PC-3 (cell line): ENCODE measurements at regions of chr2 and their contacts with region 1.

Region 1: GRCh38 chr2:7427293-7428060 is 510.3 kb downstream of the RNF144A start:
- DNase-seq: peak; percentile 84
- ATAC-seq: peak; percentile 43
- H3K4me3 ChIP-seq: no peak overlapping the region
- H3K27ac ChIP-seq: peak overlapping the region; percentile 22; the same call in 1 of the 2 replicates
- H3K4me1 ChIP-seq: no peaks in the 10 kb centered on the region
- H3K27me3 ChIP-seq: no peaks in the 10 kb centered on the region
- CTCF ChIP-seq: peak; percentile 89

Region 2: DNA sequence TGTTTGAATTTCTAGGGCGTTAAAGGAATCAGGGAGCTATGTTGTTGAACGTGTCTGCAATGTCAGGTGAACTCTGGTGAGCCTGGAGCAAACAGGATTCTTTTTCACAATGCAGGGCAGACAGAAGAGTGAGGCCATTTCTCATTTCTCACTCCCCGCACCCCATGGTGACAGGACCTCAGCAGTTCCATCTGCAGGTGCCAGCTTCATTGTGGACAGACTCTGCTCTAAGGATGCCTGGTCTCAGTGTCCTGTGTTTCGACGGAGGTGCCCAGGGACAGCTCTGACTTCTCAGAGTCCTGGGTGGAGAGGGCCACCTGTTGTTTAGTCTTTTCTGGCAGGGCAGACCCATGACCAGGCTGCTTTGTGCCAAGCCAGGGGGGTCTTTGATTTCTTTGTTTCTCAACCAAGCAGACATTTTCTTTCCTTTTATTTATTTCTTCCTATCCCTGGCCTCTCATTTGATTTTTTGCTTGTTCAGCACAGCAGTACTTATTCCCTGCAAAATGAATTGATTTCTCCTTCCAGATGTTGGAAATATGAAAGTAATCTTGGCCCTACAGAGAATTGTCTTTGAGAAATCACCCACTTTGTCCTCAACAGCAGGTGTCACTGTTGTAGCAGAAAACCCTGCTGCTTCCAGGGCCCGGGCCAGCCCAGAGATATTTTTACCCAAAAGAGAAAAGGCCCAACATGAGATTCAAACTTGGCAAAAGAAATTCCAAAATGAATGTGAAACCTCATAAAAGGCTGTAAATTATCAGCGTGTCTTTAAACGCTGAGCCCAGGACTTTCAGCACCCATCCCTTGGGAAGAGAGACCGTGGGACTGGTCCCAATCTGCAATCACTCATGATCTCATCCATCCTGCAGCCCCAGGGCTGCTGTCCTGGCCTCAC is 308.6 kb before region 1 on chr2:
- CTCF ChIA-PET with region 1: no interaction called
- POLR2A ChIA-PET with region 1: no interaction called
- intact Hi-C with region 1: loop called (anchors 2 kb)
- DNase-seq: peak; percentile 61
- ATAC-seq: peak; percentile 89
- H3K4me3 ChIP-seq: no peak overlapping the region
- H3K27ac ChIP-seq: no peak overlapping the region
- H3K4me1 ChIP-seq: no peaks in the 10 kb centered on the region
- H3K27me3 ChIP-seq: no peaks in the 10 kb centered on the region
- CTCF ChIP-seq: peak; percentile 89

Region 3: GRCh38 chr2:7517088-7517487 is 89.6 kb after region 1 on chr2:
- CTCF ChIA-PET with region 1: interaction called, 4 read pairs
- POLR2A ChIA-PET with region 1: no interaction called
- intact Hi-C with region 1: loop called (anchors 2 kb)
- DNase-seq: peak; percentile 89
- ATAC-seq: peak; percentile 83
- H3K4me3 ChIP-seq: peak overlapping the region; percentile 20; the same call in 1 of the 2 replicates
- H3K27ac ChIP-seq: peak overlapping the region; percentile 97
- H3K4me1 ChIP-seq: peaks cover 32% of the 10 kb centered on the region
- H3K27me3 ChIP-seq: no peaks in the 10 kb centered on the region
- CTCF ChIP-seq: no peak

Region 4: GRCh38 chr2:7672027-7672684 is 244.7 kb after region 1 on chr2:
- CTCF ChIA-PET with region 1: interaction called, 6 read pairs
- POLR2A ChIA-PET with region 1: no interaction called
- intact Hi-C with region 1: loop called (anchors 1 kb)
- DNase-seq: peak; percentile 88
- ATAC-seq: peak; percentile 74
- H3K4me3 ChIP-seq: no peak overlapping the region
- H3K27ac ChIP-seq: no peak overlapping the region
- H3K4me1 ChIP-seq: 0 out of 2 replicates have a peak, but pooled peaks cover 6% of the 10 kb centered on the region
- H3K27me3 ChIP-seq: no peaks in the 10 kb centered on the region
- CTCF ChIP-seq: peak; percentile 92

Region 5: GRCh38 chr2:7812231-7812995 is 384.9 kb after region 1 on chr2:
- CTCF ChIA-PET with region 1: interaction called, 4 read pairs
- POLR2A ChIA-PET with region 1: no interaction called
- intact Hi-C with region 1: loop called (anchors 10 kb)
- DNase-seq: peak; percentile 88
- ATAC-seq: peak; percentile 91
- H3K4me3 ChIP-seq: peak overlapping the region; percentile 3; the same call in 1 of the 2 replicates
- H3K27ac ChIP-seq: peak overlapping the region; percentile 94
- H3K4me1 ChIP-seq: peaks cover 35% of the 10 kb centered on the region
- H3K27me3 ChIP-seq: no peaks in the 10 kb centered on the region
- CTCF ChIP-seq: no peak

Region 6: DNA sequence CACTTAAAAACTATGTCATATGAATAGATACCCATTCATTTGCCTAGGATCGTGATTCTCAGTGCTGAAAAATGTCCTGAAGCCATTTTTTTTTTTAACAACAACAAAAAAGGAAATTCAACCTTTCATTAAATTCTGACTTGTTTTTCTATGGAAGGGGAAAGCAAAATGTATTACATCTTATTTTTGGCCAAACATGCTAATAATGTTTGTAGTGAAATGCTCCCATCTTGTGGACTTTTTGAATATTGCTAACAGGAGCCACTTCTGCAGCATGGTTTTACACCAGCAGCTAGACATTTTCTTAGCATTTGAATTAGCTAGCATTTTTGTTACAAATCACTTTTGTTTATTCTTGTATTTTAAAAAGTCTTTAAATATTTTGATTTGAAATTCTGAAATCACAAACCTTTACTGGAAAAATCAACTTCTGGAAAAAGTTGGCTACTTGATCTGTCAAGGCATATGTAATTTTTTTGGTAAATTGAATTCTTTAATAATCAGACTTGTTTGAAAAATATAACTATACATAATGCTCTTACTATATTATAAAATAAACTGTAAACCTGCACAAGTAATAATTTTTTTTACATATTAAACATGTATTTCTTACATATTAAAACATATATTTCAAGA is 1334.2 kb after region 1 on chr2:
- CTCF ChIA-PET with region 1: no interaction called
- POLR2A ChIA-PET with region 1: no interaction called
- intact Hi-C with region 1: loop called (anchors 10 kb)
- DNase-seq: peak; percentile 77
- ATAC-seq: peak; percentile 50; the same call in 1 of the 2 replicates
- H3K4me3 ChIP-seq: no peak overlapping the region
- H3K27ac ChIP-seq: no peak overlapping the region
- H3K4me1 ChIP-seq: no peaks in the 10 kb centered on the region
- H3K27me3 ChIP-seq: no peaks in the 10 kb centered on the region
- CTCF ChIP-seq: peak; percentile 78